ENCODE measurements at regions of chr13 and their contacts with region 1.

Region 1: DNA sequence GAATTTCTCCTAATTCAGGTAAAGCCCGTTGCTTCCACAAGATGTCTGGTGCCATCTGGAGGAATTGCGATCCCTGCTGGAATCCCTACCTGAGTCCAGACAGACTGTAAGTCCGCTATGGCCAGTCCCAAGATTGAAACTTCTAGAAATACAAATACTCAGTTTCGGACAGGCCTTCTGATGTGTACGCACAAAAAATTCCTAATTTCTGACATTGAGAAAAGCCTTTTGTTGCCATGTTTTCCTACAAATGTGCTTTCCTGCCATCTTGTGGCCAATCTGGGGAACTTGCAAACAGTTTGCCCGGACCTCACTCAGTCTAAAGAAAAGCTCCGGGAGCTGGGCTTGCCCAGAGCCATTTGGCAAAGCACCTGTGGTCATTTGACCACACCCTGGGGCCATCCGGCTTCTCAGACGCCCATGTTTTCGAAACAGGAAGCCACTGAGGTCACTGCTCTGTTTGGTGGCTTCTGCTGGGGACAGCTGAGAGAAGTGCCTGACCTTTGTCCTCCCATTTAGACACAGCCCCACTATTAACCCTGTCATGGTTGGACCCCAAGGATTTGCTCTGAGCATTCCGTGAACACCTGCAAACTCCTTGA is 79.4 kb downstream of the SLC15A1 start:
- DNase-seq: peak; percentile 67
- H3K4me3 ChIP-seq: no peak overlapping the region
- H3K27ac ChIP-seq: no peak overlapping the region
- H3K4me1 ChIP-seq: no peaks in the 10 kb centered on the region
- H3K27me3 ChIP-seq: peaks cover 6% of the 10 kb centered on the region in 2 experiments
- CTCF ChIP-seq: peak; percentile 77 to 78
- POLR2A ChIP-seq: no peak

Region 2: DNA sequence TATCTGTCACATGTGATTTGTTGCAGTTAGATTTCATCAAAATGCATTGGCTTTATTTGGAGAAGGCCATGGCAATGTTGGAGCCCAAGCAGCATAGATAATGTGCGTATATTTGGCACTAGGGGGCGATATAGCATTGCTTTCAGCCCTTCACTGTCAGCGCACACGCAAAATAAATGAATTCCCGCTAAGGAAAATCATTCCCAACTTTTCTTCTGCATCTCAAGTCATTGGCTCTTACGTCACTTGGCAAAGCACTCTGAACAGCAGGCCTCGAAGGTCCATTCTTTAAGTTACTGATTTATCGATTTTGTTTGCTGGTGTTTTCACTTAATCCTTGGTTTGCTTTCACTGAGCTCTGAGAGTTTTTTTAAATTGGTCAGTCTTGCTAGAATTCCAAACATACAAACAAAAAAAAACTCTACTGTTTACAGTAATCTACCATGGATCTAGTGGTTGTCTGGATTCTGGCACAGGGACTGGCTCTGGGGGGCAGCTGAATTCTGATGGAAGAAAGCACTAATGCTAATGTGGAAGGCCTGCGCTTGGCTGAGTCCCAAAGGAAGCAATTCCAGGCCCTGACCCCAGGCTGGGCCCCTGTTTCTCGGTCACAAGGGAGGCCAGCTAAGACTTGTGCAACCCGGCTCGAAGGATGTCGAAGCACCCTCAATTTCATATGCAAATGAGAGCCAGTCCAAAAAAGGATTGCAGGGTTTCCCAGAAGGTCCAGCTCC is 817.3 kb before region 1 on chr13:
- CTCF ChIA-PET with region 1: interaction called, 30 read pairs
- POLR2A ChIA-PET with region 1: no interaction called
- dilution Hi-C with region 1: no loop called
- intact Hi-C with region 1: loop called (anchors 1 kb)
- DNase-seq: peak; percentile 78
- H3K4me3 ChIP-seq: no peak overlapping the region
- H3K27ac ChIP-seq: no peak overlapping the region
- H3K4me1 ChIP-seq: no peaks in the 10 kb centered on the region
- H3K27me3 ChIP-seq: no peaks in the 10 kb centered on the region
- CTCF ChIP-seq: peak; percentile 72 to 76
- POLR2A ChIP-seq: no peak

Region 3: GRCh38 chr13:98033277-98034247 is 639.5 kb before region 1 on chr13:
- CTCF ChIA-PET with region 1: interaction called, 42 read pairs
- POLR2A ChIA-PET with region 1: no interaction called
- dilution Hi-C with region 1: no loop called
- intact Hi-C with region 1: loop called (anchors 1 kb)
- DNase-seq: peak; percentile 45
- H3K4me3 ChIP-seq: no peak overlapping the region
- H3K27ac ChIP-seq: no peak overlapping the region
- H3K4me1 ChIP-seq: no peaks in the 10 kb centered on the region
- H3K27me3 ChIP-seq: no peaks in the 10 kb centered on the region
- CTCF ChIP-seq: peak; percentile 14 to 35
- POLR2A ChIP-seq: no peak

Region 4: DNA sequence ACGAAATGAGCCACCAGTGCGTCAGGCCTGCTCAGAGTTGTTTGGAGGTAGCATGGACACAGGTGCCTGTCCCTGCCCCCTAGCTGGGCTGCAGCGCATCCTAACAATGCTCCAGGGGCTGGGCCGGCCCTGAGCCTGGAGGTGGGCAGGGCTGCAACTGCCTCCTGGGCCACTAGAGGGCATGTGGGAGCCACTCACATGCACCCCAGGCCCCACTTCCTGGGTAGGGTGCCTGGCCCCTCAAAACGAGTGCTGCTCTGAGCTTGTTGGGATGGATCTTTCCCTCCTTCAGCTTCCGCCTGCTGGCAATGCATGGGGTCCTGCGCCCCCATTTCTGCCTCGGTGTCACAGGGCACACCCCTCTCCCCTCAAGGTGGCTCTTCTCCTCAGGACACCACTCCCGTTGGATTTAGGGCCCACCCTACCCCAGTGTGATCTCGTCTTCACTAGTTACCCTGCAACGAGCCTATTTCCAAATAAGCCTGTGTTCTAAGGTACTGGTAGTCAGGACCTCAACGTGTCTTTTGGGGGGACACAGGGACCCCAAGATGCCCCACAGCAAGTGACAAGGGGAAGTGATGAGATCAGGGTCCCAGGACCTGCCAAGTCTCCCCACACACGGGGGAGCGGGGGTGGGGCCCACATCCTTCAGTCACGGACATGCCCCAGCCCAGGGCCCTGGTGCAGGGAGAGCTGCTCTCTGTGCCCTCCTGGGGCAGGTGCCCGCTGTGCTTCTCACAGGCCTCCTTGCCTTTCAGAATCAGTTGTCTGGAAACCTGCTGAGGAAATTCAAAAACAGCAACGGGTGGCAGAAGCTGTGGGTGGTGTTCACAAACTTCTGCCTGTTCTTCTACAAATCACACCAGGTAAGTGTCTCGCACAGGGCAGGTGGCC is 227.5 kb before region 1 on chr13:
- CTCF ChIA-PET with region 1: interaction called, 94 read pairs
- POLR2A ChIA-PET with region 1: no interaction called
- dilution Hi-C with region 1: loop called (anchors 25 kb)
- intact Hi-C with region 1: loop called (anchors 1 kb)
- DNase-seq: peak; percentile 64
- H3K4me3 ChIP-seq: no peak overlapping the region
- H3K27ac ChIP-seq: no peak overlapping the region
- H3K4me1 ChIP-seq: no peaks in the 10 kb centered on the region
- H3K27me3 ChIP-seq: no peaks in the 10 kb centered on the region
- CTCF ChIP-seq: peak; percentile 93 to 99
- POLR2A ChIP-seq: no peak

Region 5: DNA sequence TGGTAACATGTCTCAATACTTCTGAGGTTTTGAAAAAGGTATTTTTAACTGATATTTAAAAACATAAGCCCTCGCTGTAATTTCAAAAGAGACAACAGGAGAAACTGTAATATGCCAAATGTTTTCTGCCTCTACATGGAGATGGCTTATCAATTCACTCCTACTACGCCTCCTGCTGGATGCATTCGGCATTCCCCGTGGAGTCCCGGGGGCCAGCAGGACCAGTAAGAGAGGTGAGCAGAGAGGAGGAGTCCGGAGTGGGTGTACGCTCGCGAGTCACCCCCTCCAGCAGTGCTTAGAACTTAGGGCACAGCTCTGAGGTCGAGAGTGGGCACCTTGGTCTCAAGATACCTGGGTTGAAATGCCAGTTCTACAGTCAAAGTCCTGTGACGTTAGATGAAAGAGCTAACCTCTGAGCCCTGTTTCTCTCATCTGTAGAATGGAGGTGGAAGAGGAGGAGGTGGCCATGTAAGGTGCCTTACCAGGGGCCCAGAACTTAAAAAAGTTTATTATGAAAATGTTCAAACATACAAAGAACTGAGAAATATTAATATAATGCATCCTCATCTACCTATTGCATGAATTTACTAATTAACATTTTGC is 206.3 kb before region 1 on chr13:
- CTCF ChIA-PET with region 1: interaction called, 11 read pairs
- POLR2A ChIA-PET with region 1: no interaction called
- dilution Hi-C with region 1: no loop called
- intact Hi-C with region 1: no loop called
- DNase-seq: peak; percentile 67
- H3K4me3 ChIP-seq: no peak overlapping the region
- H3K27ac ChIP-seq: no peak overlapping the region
- H3K4me1 ChIP-seq: no peaks in the 10 kb centered on the region
- H3K27me3 ChIP-seq: no peaks in the 10 kb centered on the region
- CTCF ChIP-seq: peak; percentile 75 to 77
- POLR2A ChIP-seq: no peak

Region 6: DNA sequence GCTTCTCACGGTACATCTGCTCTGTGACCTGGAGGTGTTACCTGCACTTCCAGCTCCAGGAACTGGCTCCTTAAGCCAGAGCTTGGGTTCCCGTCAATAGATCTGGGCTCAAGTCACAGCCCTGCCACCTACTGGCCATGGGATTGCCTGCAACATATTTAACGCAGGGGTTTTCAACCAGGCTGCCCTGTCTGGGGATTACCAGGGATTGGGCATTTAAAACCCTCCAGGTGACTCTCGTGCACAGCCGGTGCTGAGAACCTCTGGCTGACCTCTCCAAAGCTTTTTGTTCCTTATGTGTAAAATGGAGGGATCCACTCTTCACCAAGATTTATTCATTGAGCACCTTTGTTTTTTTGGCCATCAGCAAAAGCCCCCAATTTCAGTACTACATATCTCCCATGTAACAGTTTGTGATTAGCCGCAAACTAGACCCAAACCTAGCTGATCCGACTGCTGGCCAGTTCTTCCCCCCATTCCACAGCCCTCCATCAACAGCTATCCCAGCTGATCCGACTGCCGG is 19.5 kb before region 1 on chr13:
- CTCF ChIA-PET with region 1: interaction called, 22 read pairs
- POLR2A ChIA-PET with region 1: no interaction called
- dilution Hi-C with region 1: no loop called
- intact Hi-C with region 1: no loop called
- DNase-seq: peak; percentile 78
- H3K4me3 ChIP-seq: no peak overlapping the region
- H3K27ac ChIP-seq: no peak overlapping the region
- H3K4me1 ChIP-seq: no peaks in the 10 kb centered on the region
- H3K27me3 ChIP-seq: peaks cover 0 to 5% of the 10 kb centered on the region in 2 experiments
- CTCF ChIP-seq: peak; percentile 79 to 86
- POLR2A ChIP-seq: no peak

Region 7: DNA sequence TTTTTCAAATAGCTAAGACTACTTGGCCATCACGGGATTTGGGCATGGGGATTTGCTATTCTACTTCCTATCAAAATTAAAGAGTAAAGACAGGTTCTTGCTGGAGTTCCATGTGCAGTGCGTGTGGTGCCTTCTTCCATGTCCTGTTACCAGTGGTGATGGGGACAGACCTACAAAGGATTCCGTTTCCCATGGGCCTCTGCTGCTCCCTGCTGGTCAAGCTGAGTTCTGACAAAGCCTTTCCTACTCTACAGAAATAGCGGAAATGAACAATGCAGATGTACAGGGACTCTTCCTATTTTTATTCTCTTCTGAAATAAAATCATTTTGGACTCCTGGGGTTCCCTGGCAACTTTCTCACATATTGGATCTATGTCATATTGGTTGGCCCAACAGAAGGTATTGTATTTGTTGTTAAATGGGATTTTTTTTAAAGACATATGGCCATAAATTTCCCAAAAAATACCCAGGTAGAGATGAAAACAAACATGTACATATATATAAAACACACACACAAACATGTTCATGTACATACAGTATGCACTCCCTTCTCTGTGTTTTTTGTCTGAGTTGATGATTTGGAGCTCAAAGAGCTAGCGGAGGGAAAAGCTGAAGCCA is 169.9 kb after region 1 on chr13:
- CTCF ChIA-PET with region 1: interaction called, 3 read pairs
- POLR2A ChIA-PET with region 1: no interaction called
- dilution Hi-C with region 1: no loop called
- intact Hi-C with region 1: loop called (anchors 2 kb)
- DNase-seq: peak; percentile 77
- H3K4me3 ChIP-seq: no peak overlapping the region
- H3K27ac ChIP-seq: no peak overlapping the region
- H3K4me1 ChIP-seq: peaks cover 6% of the 10 kb centered on the region
- H3K27me3 ChIP-seq: no peaks in the 10 kb centered on the region
- CTCF ChIP-seq: peak; percentile 79 to 85
- POLR2A ChIP-seq: no peak

Region 8: GRCh38 chr13:98967491-98967890 is 294.4 kb after region 1 on chr13:
- CTCF ChIA-PET with region 1: no interaction called
- POLR2A ChIA-PET with region 1: no interaction called
- dilution Hi-C with region 1: no loop called
- intact Hi-C with region 1: no loop called
- DNase-seq: no peak
- H3K4me3 ChIP-seq: no peak overlapping the region
- H3K27ac ChIP-seq: no peak overlapping the region
- H3K4me1 ChIP-seq: peaks cover 49% of the 10 kb centered on the region
- H3K27me3 ChIP-seq: no peaks in the 10 kb centered on the region
- CTCF ChIP-seq: no peak
- POLR2A ChIP-seq: no peak

Region 9: DNA sequence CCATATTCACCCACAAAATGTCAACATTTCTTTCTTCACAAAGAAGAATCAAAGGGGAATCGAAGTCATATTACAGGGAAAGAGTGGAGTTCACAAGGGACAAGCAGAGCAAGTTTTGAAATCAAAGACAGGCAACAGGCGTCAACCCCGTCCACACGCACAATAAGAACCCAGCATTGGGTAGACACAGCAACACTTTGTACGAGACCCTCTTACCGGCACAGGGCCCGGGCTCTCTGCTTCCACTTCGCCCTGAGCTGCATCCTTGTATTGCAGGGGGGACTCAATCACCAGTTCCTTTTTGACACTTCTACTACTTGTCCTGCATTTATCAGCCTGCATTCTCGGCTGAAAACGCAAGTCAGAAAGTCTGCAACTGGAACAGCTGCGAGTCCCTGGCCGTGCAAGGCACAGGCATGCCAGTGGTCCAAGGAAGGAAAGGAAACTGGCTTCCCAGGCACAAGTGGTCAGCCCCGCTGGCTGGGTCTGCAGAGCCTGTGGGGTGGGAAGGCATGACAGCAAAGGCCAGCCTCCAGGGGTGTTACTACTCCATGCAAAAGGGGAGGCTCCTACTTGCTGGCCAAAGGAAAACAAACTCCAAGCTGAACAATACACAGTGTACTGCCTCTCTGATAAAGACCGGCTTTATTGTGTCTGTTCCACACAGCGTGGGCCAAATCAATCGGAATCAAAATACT is 304.7 kb after region 1 on chr13 and contains the start of gene DOCK9:
- CTCF ChIA-PET with region 1: no interaction called
- POLR2A ChIA-PET with region 1: no interaction called
- dilution Hi-C with region 1: no loop called
- intact Hi-C with region 1: no loop called
- DNase-seq: peak; percentile 89
- H3K4me3 ChIP-seq: peak within 1 kb of the TSS; percentile 47 to 100 (median 86)
- H3K27ac ChIP-seq: peak within 1 kb of the TSS; percentile 97
- H3K4me1 ChIP-seq: peaks cover 52% of the 10 kb centered on the region
- H3K27me3 ChIP-seq: no peaks in the 10 kb centered on the region
- CTCF ChIP-seq: no peak
- POLR2A ChIP-seq: peak; percentile 87
- total RNA-seq, gene DOCK9: 323 and 334 TPM in 2 replicates

Region 10: DNA sequence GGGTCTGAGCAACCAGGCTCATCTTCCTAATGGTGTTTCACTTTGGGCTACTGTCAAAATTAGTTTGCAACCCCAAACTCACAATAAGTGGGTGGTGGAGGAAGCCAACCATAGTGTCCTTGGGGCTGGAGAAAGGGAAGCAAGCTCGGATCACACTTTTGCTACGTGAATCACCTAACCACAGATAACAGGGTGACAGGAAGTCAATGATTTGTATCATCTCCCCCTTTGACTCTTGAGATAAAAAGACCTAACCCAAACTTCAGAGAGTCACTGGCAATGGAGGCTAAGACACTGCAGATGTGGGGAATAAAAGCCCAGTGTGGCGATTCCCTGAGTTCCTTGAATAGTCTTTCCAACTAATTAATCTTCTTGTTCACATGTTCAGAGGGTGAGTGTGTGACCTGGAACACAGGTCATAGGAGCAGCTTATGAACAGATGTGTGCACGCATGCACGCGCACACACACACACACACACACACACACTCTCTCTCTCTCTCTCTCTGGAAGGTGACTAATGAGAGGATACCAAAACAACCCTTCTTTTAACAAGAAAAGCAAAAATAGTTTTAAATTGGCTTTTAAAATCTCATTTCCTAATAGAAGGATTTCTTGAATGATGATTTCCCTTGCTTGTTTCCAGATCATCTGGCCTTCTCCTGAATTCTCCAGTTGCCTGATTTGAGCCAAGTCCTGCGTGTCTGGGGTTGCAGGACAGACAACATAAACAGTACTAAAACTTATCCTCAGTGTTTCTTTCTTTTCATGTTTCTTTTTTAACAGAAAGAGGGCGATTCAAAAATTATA is 326.0 kb after region 1 on chr13:
- CTCF ChIA-PET with region 1: no interaction called
- POLR2A ChIA-PET with region 1: no interaction called
- dilution Hi-C with region 1: no loop called
- intact Hi-C with region 1: no loop called
- DNase-seq: no peak
- H3K4me3 ChIP-seq: no peak overlapping the region
- H3K27ac ChIP-seq: no peak overlapping the region
- H3K4me1 ChIP-seq: peaks cover 28% of the 10 kb centered on the region
- H3K27me3 ChIP-seq: no peaks in the 10 kb centered on the region
- CTCF ChIP-seq: no peak
- POLR2A ChIP-seq: no peak